ENCODE measurements at regions of chr11 and their contacts with region 1.

Region 1: DNA sequence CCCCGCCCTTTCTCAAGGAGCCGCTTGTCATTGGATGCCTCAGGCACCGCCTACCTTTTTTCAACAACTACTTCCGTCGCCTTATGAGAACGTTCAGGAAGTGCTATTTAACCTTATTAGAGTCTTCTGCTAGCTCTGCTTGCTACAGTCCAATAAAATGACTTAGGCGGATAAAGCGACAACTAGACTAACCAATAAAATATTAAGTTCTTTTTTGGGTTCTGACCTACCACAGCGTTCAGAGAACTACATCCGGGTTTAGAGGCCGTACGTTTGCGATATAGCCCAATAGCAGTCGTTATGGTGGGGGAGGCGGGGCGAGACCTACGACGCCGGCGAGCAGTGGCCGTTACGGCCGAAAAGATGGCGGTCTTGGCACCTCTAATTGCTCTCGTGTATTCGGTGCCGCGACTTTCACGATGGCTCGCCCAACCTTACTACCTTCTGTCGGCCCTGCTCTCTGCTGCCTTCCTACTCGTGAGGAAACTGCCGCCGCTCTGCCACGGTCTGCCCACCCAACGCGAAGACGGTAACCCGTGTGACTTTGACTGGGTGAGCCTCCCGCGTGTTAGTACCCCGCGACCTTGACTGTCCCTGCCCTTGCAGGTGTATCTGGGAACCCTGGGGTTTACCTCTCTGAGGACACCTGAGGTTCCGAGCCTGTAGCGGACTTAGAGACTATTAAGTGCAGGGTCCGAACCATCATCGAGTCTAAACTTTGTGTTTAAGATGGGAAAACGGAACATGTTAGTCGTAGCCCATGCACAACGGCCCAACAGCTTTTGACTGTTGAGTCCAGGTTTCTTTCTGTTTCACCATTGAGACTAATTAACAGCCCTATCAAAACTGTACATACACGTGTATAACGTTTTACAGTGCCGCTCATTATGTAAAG is at the start of gene TMX2:
- DNase-seq: peak; percentile 68 to 97 (median 81)
- ATAC-seq: peak; percentile 95
- H3K4me3 ChIP-seq: peak within 1 kb of the TSS; percentile 95
- H3K27ac ChIP-seq: peak within 1 kb of the TSS; percentile 99
- H3K4me1 ChIP-seq: peaks cover 9% of the 10 kb centered on the region in 2 experiments; a peak in 3 of 5 replicates
- H3K27me3 ChIP-seq: no peaks in the 10 kb centered on the region
- CTCF ChIP-seq: no peak
- EP300 ChIP-seq: no peak
- POLR2A ChIP-seq: peak; percentile 95
- RAD21 ChIP-seq: 0 out of 4 replicates have a peak, but pooled peaks of 1 of the 2 experiments have one; percentile 11
- polyA plus RNA-seq, gene TMX2: 381 to 433 TPM

Region 2: GRCh38 chr11:57698843-57699365 is 13.6 kb before region 1 on chr11:
- CTCF ChIA-PET with region 1: no interaction called
- POLR2A ChIA-PET with region 1: interaction called, 13 read pairs
- in situ Hi-C with region 1: no loop called
- intact Hi-C with region 1: no loop called
- DNase-seq: no peak
- ATAC-seq: no peak
- H3K4me3 ChIP-seq: no peak overlapping the region
- H3K27ac ChIP-seq: no peak overlapping the region
- H3K4me1 ChIP-seq: no peaks in the 10 kb centered on the region
- H3K27me3 ChIP-seq: no peaks in the 10 kb centered on the region
- CTCF ChIP-seq: no peak
- EP300 ChIP-seq: no peak
- POLR2A ChIP-seq: no peak
- RAD21 ChIP-seq: no peak

Region 3: GRCh38 chr11:57729479-57729878 is 17.0 kb after region 1 on chr11:
- CTCF ChIA-PET with region 1: no interaction called
- POLR2A ChIA-PET with region 1: interaction called, 53 read pairs
- in situ Hi-C with region 1: no loop called
- intact Hi-C with region 1: no loop called
- DNase-seq: no peak
- ATAC-seq: no peak
- H3K4me3 ChIP-seq: no peak overlapping the region
- H3K27ac ChIP-seq: peak overlapping the region; percentile 8; the same call in 1 of the 3 replicates
- H3K4me1 ChIP-seq: peaks cover 3 to 4% of the 10 kb centered on the region in 2 experiments; a peak in 4 of 5 replicates
- H3K27me3 ChIP-seq: no peaks in the 10 kb centered on the region
- CTCF ChIP-seq: no peak
- EP300 ChIP-seq: no peak
- POLR2A ChIP-seq: no peak
- RAD21 ChIP-seq: no peak